ENCODE measurements at regions of chr10 and their contacts with region 1.

Region 1: GRCh38 chr10:110993024-110993693 is 73.8 kb downstream of the SHOC2 start:
- DNase-seq: no peak
- H3K4me3 ChIP-seq: no peak overlapping the region
- H3K27ac ChIP-seq: no peak overlapping the region
- H3K4me1 ChIP-seq: peaks cover 0 to 5% (median 2%) of the 10 kb centered on the region in 4 donors
- H3K27me3 ChIP-seq: no peaks in the 10 kb centered on the region
- CTCF ChIP-seq: no peak
- EP300 ChIP-seq: no peak
- POLR2A ChIP-seq: no peak

Region 2: DNA sequence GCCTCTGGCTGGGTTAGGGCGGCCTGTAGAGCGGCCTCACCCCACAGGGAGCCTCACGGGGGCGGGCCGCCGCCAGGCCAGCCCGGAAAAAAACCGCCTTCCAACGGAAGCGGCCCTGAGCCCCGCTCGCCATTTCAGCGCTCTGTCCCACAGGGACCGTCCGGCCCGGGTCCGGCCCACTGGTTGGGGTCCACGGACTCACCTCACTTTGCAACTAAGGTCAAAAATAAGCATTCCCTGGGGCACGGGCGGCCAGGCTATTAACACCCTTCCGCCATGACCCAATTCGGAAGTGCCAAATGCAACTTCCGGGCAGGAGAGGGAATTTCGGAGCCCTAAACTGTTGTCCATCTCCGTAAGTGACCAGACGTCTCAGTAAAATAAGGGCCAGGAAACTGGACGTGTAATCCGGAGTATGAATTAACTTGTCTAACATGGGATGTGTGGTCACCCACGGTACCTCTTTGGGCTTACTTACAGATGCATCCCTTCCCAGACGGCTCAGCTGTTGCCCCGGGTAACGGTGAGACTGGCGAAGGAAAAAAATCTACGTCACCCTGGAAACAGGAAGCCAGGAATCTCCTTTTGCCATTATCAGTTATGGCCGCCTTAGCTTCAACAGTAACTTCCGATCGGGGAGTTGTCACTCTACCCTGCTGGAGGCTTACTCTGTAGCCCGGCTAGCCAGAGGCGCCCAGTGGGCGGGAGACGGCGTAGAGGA is 74.4 kb before region 1 on chr10 and contains the start of gene BBIP1:
- intact Hi-C with region 1: loop called (anchors 10 kb)
- DNase-seq: no peak
- H3K4me3 ChIP-seq: peak within 1 kb of the TSS; percentile 70 to 91 (median 77)
- H3K27ac ChIP-seq: peak within 1 kb of the TSS; percentile 96 to 98 (median 98)
- H3K4me1 ChIP-seq: peaks cover 0 to 45% (median 37%) of the 10 kb centered on the region in 4 donors
- H3K27me3 ChIP-seq: no peaks in the 10 kb centered on the region
- CTCF ChIP-seq: no peak
- EP300 ChIP-seq: peak in 2 of 4 donors; percentile 5 to 9
- POLR2A ChIP-seq: peak; percentile 23 to 39
- total RNA-seq, gene BBIP1: 19.7 to 36.8 (median 27.5) TPM

Measured in sigmoid colon (tissue), 7 donors.